ENCODE measurements at regions of chr1 and their contacts with region 1.

Region 1: GRCh38 chr1:53739109-53739681 is at the start of gene GLIS1:
- DNase-seq: peak; percentile 86
- H3K4me3 ChIP-seq: peak within 1 kb of the TSS; percentile 21 to 52 (median 47)
- H3K27ac ChIP-seq: no peak within 1 kb of the TSS
- H3K4me1 ChIP-seq: peaks cover 11% of the 10 kb centered on the region
- H3K27me3 ChIP-seq: peaks cover 40 to 52% of the 10 kb centered on the region in 2 experiments
- CTCF ChIP-seq: no peak
- POLR2A ChIP-seq: no peak
- total RNA-seq, gene GLIS1: not detected in 2 replicates

Region 2: GRCh38 chr1:53715478-53715877 is 23.7 kb before region 1 on chr1:
- CTCF ChIA-PET with region 1: interaction called, 13 read pairs
- POLR2A ChIA-PET with region 1: no interaction called
- dilution Hi-C with region 1: no loop called
- intact Hi-C with region 1: no loop called
- DNase-seq: peak; percentile 30
- H3K4me3 ChIP-seq: no peak overlapping the region
- H3K27ac ChIP-seq: no peak overlapping the region
- H3K4me1 ChIP-seq: no peaks in the 10 kb centered on the region
- H3K27me3 ChIP-seq: peaks cover 0 to 9% of the 10 kb centered on the region in 2 experiments
- CTCF ChIP-seq: peak; percentile 51 to 86
- POLR2A ChIP-seq: no peak

Region 3: GRCh38 chr1:53765657-53766056 is 26.5 kb after region 1 on chr1:
- CTCF ChIA-PET with region 1: interaction called, 3 read pairs
- POLR2A ChIA-PET with region 1: no interaction called
- dilution Hi-C with region 1: no loop called
- intact Hi-C with region 1: loop called (anchors 2 kb)
- DNase-seq: peak; percentile 94
- H3K4me3 ChIP-seq: no peak overlapping the region
- H3K27ac ChIP-seq: peak overlapping the region; percentile 77
- H3K4me1 ChIP-seq: peaks cover 28% of the 10 kb centered on the region
- H3K27me3 ChIP-seq: no peaks in the 10 kb centered on the region
- CTCF ChIP-seq: no peak
- POLR2A ChIP-seq: peak; percentile 36

Region 4: DNA sequence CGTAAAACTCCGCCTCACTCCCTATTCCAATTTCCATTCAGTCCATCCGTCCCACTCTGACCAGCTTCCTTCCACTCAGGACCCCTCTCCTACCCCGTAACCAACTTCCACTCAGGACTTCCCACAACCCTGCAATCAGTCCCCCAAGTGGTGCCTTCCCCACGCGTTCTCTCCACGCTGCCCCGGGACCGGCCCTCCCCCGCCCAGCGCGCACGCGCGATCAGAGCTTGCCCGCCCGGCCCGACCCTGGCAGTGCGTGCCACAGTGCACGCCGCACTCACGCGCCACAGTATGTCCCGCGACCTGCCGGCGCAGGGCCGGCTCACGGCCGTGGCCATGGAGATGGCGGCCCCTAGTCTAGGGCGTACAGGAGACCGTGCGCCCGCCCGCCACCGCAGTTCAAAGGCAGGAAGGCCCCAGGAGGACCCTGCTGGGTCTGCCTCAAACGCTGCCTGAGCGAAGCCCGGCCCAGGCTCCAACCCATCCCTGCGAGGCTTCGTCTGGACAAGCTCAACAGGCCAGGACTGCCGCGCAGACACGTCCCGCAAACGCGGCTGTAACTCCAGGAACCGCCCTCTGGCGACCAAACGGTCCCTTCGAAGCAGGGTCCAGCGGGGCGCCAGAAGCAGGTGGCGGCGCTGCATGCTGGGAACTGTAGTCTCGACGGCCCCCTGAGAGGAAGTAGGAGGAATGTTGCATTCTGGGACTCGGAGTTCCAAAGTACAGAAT is 98.9 kb after region 1 on chr1 and contains the start of gene NDC1:
- CTCF ChIA-PET with region 1: no interaction called
- POLR2A ChIA-PET with region 1: no interaction called
- dilution Hi-C with region 1: no loop called
- intact Hi-C with region 1: loop called (anchors 2 kb)
- DNase-seq: peak; percentile 96
- H3K4me3 ChIP-seq: peak within 1 kb of the TSS; percentile 86 to 97 (median 91)
- H3K27ac ChIP-seq: peak within 1 kb of the TSS; percentile 82
- H3K4me1 ChIP-seq: peaks cover 5% of the 10 kb centered on the region
- H3K27me3 ChIP-seq: no peaks in the 10 kb centered on the region
- CTCF ChIP-seq: peak in 1 of 2 donors; percentile 26
- POLR2A ChIP-seq: no peak
- total RNA-seq, gene NDC1: 29.2 and 30.2 TPM in 2 replicates

Region 5: GRCh38 chr1:53869454-53870117 is 130.4 kb after region 1 on chr1:
- CTCF ChIA-PET with region 1: no interaction called
- POLR2A ChIA-PET with region 1: no interaction called
- dilution Hi-C with region 1: no loop called
- intact Hi-C with region 1: no loop called
- DNase-seq: no peak
- H3K4me3 ChIP-seq: no peak overlapping the region
- H3K27ac ChIP-seq: no peak overlapping the region
- H3K4me1 ChIP-seq: peaks cover 8% of the 10 kb centered on the region
- H3K27me3 ChIP-seq: no peaks in the 10 kb centered on the region
- CTCF ChIP-seq: no peak
- POLR2A ChIP-seq: no peak